ENCODE measurements at regions of chr2 and their contacts with region 1.

Region 1: DNA sequence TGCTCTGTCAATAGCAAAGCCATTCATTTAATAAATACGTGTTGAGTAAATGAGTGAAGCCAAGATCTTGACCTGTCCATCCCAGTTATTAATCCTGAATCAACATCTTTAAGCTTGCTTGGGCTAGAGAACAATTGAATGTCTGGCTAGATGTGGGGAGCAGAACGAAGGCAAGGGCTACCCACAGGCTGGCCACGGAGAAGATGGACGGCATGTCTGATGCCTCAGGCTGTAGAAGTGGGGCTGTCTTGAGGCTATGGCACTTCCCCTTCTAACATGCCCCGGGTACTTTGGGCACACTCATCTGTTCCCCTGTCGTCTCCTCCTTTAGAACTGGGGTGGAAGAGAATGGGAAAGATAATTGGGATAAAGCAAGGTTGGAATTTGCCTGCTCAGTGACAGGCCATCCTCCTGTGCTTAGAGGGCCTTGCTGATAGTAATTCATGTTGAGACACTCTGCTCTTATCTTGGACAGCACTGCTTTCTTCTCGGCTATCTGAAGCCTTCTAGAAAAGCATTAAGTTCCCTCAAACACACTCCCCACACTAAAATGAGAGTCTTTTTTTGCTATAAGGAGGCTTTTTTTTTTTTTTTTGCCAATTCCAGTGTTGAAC is 225.7 kb downstream of the MREG start:
- DNase-seq: no peak
- ATAC-seq: no peak
- H3K4me3 Mint-ChIP-seq: no peak overlapping the region
- H3K27ac Mint-ChIP-seq: no peak overlapping the region
- H3K4me1 Mint-ChIP-seq: no peaks in the 10 kb centered on the region
- H3K27me3 Mint-ChIP-seq: peaks cover 2% of the 10 kb centered on the region
- CTCF ChIP-seq: no peak

Region 2: GRCh38 chr2:215401896-215402379 is 385.7 kb before region 1 on chr2:
- CTCF ChIA-PET with region 1: no interaction called
- POLR2A ChIA-PET with region 1: no interaction called
- intact Hi-C with region 1: no loop called
- DNase-seq: no peak
- ATAC-seq: no peak
- H3K4me3 Mint-ChIP-seq: no peak overlapping the region
- H3K27ac Mint-ChIP-seq: no peak overlapping the region
- H3K4me1 Mint-ChIP-seq: no peaks in the 10 kb centered on the region
- H3K27me3 Mint-ChIP-seq: peaks cover 3% of the 10 kb centered on the region
- CTCF ChIP-seq: no peak

Region 3: DNA sequence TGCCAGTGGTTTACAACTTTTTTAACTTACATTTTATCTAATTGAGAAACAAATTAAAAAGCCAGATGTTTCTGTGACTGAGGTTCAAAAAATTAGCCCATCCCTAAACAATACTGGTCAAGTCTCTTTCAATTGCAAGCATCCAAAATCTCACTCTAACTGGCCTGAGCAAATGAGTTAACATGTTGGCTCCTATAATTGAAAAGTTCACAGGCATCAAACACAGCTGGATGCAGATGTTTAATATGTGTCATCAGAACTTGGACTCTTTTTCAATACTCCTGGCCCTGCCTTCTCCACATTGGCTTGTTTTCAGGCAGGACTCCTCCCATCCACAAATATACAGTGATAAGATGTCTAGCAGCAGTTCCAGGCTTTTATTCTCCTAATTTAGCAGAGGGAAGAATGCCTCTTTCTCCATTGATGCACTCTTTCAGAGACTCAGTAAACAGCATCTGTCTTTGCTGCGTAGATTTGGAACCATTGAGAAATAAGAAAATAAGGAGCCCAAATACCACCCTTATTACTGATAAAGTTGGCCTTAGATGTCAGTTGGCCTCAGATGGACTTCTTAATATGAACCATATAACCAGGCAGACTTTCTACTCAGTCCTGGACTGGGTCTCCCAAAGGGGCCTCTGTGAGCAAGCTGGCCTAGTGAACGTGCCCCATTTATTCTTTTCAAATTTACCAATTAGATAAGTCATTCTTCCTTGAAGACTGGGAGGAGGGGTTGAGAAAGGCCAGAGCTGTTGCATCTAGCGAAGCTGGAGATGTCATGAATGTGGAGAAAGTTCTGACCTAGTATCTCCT is 321.4 kb before region 1 on chr2:
- CTCF ChIA-PET with region 1: no interaction called
- POLR2A ChIA-PET with region 1: interaction called, 13 read pairs
- intact Hi-C with region 1: no loop called
- DNase-seq: no peak
- ATAC-seq: no peak
- H3K4me3 Mint-ChIP-seq: no peak overlapping the region
- H3K27ac Mint-ChIP-seq: no peak overlapping the region
- H3K4me1 Mint-ChIP-seq: no peaks in the 10 kb centered on the region
- H3K27me3 Mint-ChIP-seq: no peaks in the 10 kb centered on the region
- CTCF ChIP-seq: no peak

Region 4: GRCh38 chr2:215657844-215658243 is 129.8 kb before region 1 on chr2:
- CTCF ChIA-PET with region 1: no interaction called
- POLR2A ChIA-PET with region 1: no interaction called
- intact Hi-C with region 1: no loop called
- DNase-seq: no peak
- ATAC-seq: no peak
- H3K4me3 Mint-ChIP-seq: no peak overlapping the region
- H3K27ac Mint-ChIP-seq: no peak overlapping the region
- H3K4me1 Mint-ChIP-seq: no peaks in the 10 kb centered on the region
- H3K27me3 Mint-ChIP-seq: peaks cover 4% of the 10 kb centered on the region
- CTCF ChIP-seq: no peak

Measured in activated B cell treated with CpG ODN at 0.5 μM for 24 hours (primary cell).